CD8-positive, alpha-beta T cell (primary cell): ENCODE measurements at regions of chr6 and their contacts with region 1.

Region 1: DNA sequence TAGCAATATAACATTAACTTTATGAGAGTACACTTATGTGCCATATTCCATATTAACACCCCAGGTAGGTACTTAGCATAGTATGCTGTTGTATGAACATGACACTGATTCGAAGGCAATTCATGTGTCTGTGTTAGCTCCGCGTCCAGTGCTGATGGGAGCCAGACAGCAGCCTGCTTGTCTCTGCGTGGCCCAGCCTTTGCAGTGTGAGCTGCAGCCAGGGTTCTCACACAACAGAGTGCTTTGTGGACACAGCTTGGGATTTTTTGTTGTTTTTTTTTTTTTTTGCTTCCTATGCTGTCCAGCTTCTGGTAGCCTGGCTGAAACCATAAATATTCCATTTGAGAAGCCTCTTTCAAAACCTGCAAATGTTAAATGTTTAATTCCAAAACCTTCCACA is 350.9 kb downstream of the SMOC2 start:
- DNase-seq: no peak
- ATAC-seq: no peak
- H3K4me3 ChIP-seq: no peak overlapping the region
- H3K4me3 Mint-ChIP-seq: no peak overlapping the region
- H3K27ac ChIP-seq: no peak overlapping the region
- H3K27ac Mint-ChIP-seq: no peak overlapping the region
- H3K4me1 ChIP-seq: no peaks in the 10 kb centered on the region
- H3K4me1 Mint-ChIP-seq: no peaks in the 10 kb centered on the region
- H3K27me3 ChIP-seq: no peaks in the 10 kb centered on the region
- H3K27me3 Mint-ChIP-seq: peaks cover 5% of the 10 kb centered on the region
- CTCF ChIP-seq: no peak

Region 2: GRCh38 chr6:168746013-168746412 is 45.9 kb before region 1 on chr6:
- CTCF ChIA-PET with region 1: no interaction called
- POLR2A ChIA-PET with region 1: no interaction called
- intact Hi-C with region 1: loop called in 1 of 2 experiments (anchors 1 kb)
- DNase-seq: no peak
- ATAC-seq: no peak
- H3K4me3 ChIP-seq: no peak overlapping the region
- H3K4me3 Mint-ChIP-seq: no peak overlapping the region
- H3K27ac ChIP-seq: no peak overlapping the region
- H3K27ac Mint-ChIP-seq: no peak overlapping the region
- H3K4me1 ChIP-seq: no peaks in the 10 kb centered on the region
- H3K4me1 Mint-ChIP-seq: no peaks in the 10 kb centered on the region
- H3K27me3 ChIP-seq: no peaks in the 10 kb centered on the region
- H3K27me3 Mint-ChIP-seq: peaks cover 4% of the 10 kb centered on the region
- CTCF ChIP-seq: no peak